Sigmoid colon (tissue), 7 donors: ENCODE measurements at regions of chr6 and their contacts with region 1.

Region 1: GRCh38 chr6:140915103-140915502 is 1217.6 kb upstream of the GJE1 start:
- DNase-seq: no peak
- H3K4me3 ChIP-seq: no peak overlapping the region
- H3K27ac ChIP-seq: no peak overlapping the region
- H3K4me1 ChIP-seq: no peaks in the 10 kb centered on the region
- H3K27me3 ChIP-seq: no peaks in the 10 kb centered on the region
- CTCF ChIP-seq: peak in 1 of 4 experiments; percentile 10
- EP300 ChIP-seq: no peak
- POLR2A ChIP-seq: no peak

Region 2: DNA sequence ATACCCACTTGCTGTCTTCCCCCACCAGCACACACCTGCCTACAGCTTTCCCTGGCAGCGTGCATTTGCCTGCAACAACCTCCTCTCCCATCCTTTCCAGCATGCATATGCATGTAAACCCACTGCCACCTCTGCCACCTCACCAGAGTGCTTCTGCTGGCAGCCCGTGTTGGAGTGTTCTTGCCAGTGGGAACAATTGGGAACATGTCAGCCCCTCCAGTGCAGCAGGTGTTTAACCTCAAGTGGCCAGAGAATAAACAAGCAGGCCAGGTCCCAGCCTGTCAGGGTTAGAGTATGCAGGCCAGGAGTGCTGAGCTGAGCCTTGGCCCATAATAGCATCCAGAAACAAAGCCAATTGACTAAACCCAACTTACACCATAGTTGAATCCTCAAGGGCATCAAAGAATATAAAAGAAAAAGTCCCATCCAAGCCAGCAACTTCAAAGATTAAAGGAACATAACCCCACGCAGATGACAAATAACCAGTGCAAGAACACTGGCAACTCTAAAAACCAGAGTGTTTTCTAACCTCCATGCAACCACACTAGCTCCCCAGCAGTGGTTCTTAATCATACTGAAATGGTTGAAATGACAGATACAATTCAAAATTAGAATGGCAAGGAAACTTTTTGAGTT is 328.6 kb before region 1 on chr6:
- intact Hi-C with region 1: no loop called
- DNase-seq: no peak
- H3K4me3 ChIP-seq: no peak overlapping the region
- H3K27ac ChIP-seq: no peak overlapping the region
- H3K4me1 ChIP-seq: no peaks in the 10 kb centered on the region
- H3K27me3 ChIP-seq: no peaks in the 10 kb centered on the region
- CTCF ChIP-seq: no peak
- EP300 ChIP-seq: no peak
- POLR2A ChIP-seq: no peak

Region 3: DNA sequence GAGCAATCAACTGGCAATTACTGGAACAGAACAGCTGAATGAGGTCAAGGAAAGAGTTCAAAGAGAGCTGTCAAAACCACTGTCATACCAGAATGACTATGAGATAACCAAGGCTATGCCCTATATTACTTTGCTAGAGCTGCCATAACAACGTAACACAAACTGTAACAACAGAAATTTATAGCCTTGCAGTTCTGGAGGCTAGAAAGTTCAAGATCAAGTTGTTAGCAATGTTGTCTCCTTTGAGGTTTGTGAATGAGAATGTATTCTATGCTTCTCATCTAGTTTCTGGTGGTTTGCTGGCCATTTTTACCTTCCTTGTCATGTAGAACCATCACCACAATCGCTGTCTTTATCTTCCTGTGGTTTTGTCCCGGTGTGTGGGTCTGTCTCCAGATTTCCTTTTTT is 105.4 kb before region 1 on chr6:
- intact Hi-C with region 1: loop called (anchors 10 kb)
- DNase-seq: no peak
- H3K4me3 ChIP-seq: no peak overlapping the region
- H3K27ac ChIP-seq: no peak overlapping the region
- H3K4me1 ChIP-seq: no peaks in the 10 kb centered on the region
- H3K27me3 ChIP-seq: no peaks in the 10 kb centered on the region
- CTCF ChIP-seq: no peak
- EP300 ChIP-seq: no peak
- POLR2A ChIP-seq: no peak

Region 4: DNA sequence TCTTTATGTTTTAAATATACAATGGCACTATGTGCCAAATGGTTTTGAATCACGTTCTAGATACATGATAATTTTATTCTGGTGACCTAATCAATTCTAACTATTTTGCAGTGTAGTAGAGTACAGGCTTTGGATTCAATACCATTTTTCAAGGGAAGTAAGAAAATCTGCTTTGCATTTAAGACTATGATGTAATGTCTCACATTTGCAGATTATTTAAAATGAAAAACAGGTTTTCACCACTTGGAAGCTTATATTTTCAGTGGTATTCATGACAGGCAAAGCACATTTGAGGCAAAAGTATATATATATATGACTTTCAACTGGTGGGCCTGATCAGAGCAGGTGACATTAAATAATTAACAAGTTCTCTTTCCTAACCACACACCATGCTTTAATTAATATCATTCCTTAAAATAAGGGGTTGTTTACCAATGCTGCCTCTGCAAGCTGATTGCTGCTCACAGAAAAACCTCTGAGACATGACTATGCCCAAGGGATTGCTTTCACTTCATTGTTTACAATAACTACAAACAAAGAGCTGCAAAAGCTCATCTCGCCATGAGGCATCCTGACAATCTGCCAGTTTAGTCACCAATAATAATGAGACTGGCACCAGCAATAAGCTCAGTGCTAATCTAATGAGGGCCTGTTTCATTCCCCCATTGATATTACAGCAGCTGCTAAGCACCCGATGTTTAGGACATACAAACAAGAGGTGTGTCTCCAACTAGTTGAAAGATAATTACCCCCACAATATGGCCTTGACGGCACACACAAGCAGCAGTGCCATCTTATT is 41.7 kb after region 1 on chr6:
- intact Hi-C with region 1: no loop called
- DNase-seq: no peak
- H3K4me3 ChIP-seq: no peak overlapping the region
- H3K27ac ChIP-seq: no peak overlapping the region
- H3K4me1 ChIP-seq: no peaks in the 10 kb centered on the region
- H3K27me3 ChIP-seq: no peaks in the 10 kb centered on the region
- CTCF ChIP-seq: no peak
- EP300 ChIP-seq: no peak
- POLR2A ChIP-seq: no peak

Region 5: DNA sequence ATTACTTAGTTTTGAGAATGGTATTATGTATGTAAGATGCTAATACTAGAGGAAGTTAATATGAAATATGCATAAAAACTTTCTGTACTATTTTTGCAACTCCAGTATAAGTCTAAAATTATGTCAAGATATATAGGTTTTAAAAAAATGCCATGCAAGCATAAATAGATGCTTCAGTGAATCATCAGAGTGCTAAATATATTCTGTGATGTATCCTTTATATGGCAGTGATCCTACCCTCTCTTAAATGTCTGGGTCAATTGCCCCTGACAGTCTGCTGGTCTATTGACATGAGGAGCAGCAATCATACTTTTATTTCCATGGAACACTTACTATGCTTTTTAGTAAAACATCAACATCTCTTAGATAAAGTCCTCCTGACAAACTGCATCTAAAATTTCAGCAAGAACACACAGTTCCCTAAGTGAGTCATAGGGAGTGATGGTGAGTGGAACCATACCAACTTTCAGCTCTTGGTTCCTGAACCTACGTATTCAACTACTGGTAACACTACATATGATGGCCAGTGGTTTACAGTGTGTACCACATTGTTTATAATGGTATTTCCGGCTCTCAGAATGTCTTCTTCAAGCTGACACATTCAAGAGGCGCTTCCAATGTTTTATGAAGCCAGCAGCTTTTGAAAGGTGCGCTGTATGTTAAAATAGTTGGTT is 288.9 kb after region 1 on chr6:
- intact Hi-C with region 1: no loop called
- DNase-seq: no peak
- H3K4me3 ChIP-seq: no peak overlapping the region
- H3K27ac ChIP-seq: no peak overlapping the region
- H3K4me1 ChIP-seq: no peaks in the 10 kb centered on the region
- H3K27me3 ChIP-seq: no peaks in the 10 kb centered on the region
- CTCF ChIP-seq: no peak
- EP300 ChIP-seq: no peak
- POLR2A ChIP-seq: no peak